HCT116 (cell line): ENCODE measurements at regions of chr17 and their contacts with region 1.

Region 1: GRCh38 chr17:22161376-22161775 is 469.1 kb downstream of the KCNJ18 start:
- DNase-seq: no peak
- ATAC-seq: no peak
- H3K4me3 ChIP-seq: no peak overlapping the region
- H3K27ac ChIP-seq: no peak overlapping the region
- H3K4me1 ChIP-seq: no peaks in the 10 kb centered on the region
- H3K27me3 ChIP-seq: no peaks in the 10 kb centered on the region
- CTCF ChIP-seq: no peak
- POLR2A ChIP-seq: no peak
- RAD21 ChIP-seq: no peak

Region 2: GRCh38 chr17:22102177-22102576 is 59.2 kb before region 1 on chr17:
- CTCF ChIA-PET with region 1: no interaction called
- POLR2A ChIA-PET with region 1: no interaction called
- RAD21 ChIA-PET with region 1: no interaction called
- intact Hi-C with region 1: loop called (anchors 10 kb)
- DNase-seq: no peak
- ATAC-seq: no peak
- H3K4me3 ChIP-seq: no peak overlapping the region
- H3K27ac ChIP-seq: no peak overlapping the region
- H3K4me1 ChIP-seq: no peaks in the 10 kb centered on the region
- H3K27me3 ChIP-seq: no peaks in the 10 kb centered on the region
- CTCF ChIP-seq: no peak
- POLR2A ChIP-seq: no peak
- RAD21 ChIP-seq: no peak